Naive thymus-derived CD8-positive, alpha-beta T cell (primary cell): ENCODE measurements at regions of chr1 and their contacts with region 1.

Region 1: DNA sequence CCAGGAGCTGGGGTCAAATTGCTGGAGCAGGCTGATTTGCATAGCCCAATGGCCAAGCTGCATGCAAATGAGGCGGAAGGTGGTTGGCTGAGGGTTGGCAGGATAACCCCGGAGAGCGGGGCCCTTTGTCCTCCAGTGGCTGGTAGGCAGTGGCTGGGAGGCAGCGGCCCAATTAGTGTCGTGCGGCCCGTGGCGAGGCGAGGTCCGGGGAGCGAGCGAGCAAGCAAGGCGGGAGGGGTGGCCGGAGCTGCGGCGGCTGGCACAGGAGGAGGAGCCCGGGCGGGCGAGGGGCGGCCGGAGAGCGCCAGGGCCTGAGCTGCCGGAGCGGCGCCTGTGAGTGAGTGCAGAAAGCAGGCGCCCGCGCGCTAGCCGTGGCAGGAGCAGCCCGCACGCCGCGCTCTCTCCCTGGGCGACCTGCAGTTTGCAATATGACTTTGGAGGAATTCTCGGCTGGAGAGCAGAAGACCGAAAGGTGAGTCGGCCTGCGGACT is at the start of gene GADD45A:
- DNase-seq: peak; percentile 79 to 97 (median 94)
- ATAC-seq: peak; percentile 87 to 89
- H3K4me3 Mint-ChIP-seq: peak within 1 kb of the TSS; percentile 93 to 100 (median 98)
- H3K27ac Mint-ChIP-seq: peak within 1 kb of the TSS; percentile 91 to 97 (median 94)
- H3K4me1 Mint-ChIP-seq: peaks cover 11 to 34% (median 29%) of the 10 kb centered on the region in 4 donors
- H3K27me3 Mint-ChIP-seq: no peaks in the 10 kb centered on the region
- polyA plus RNA-seq, gene GADD45A: 4.1 to 13.0 (median 5.7) TPM

Region 2: DNA sequence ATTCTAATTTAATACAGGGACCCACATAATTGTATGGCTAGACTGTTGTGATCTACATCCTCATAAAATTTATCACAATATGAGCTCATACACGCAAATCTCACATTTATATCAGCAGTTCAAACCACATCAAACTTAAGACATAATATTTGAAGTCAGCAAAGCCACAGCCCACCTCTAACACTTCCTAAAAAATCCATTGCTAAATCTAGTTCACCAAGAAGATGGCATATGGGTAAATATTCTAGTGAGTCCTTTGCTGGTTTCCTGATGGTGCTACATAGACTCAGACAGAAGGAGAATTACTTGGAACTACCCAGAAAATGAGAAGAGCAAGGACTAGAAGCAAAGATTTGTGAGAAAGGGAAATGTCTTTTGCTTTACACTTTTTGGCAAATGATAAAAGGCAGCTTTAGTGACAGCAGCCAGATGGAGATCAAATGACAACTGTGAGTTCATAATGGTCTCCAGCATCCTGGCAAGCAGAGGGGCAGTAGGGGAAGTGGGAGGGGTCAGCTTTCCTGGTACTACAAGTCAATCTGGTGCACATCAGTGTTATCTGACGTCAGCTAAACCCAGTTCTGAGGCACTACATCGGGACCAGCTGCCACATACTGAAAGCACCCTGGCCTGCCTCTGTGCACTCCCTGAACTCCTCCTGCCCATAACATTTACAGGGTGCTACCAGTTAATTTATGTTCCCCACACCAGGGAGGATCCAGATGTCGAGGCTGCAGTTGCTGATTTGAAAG is 10.7 kb before region 1 on chr1:
- POLR2A ChIA-PET with region 1: interaction called, 33 read pairs
- DNase-seq: peak; percentile 25 to 85 (median 70)
- ATAC-seq: peak; percentile 83 to 85
- H3K4me3 Mint-ChIP-seq: peak overlapping the region; percentile 30 to 75 (median 60)
- H3K27ac Mint-ChIP-seq: peak overlapping the region; percentile 46 to 94 (median 88)
- H3K4me1 Mint-ChIP-seq: peaks cover 11 to 25% (median 22%) of the 10 kb centered on the region in 4 donors
- H3K27me3 Mint-ChIP-seq: peaks cover 0 to 11% (median 4%) of the 10 kb centered on the region in 5 donors

Region 3: DNA sequence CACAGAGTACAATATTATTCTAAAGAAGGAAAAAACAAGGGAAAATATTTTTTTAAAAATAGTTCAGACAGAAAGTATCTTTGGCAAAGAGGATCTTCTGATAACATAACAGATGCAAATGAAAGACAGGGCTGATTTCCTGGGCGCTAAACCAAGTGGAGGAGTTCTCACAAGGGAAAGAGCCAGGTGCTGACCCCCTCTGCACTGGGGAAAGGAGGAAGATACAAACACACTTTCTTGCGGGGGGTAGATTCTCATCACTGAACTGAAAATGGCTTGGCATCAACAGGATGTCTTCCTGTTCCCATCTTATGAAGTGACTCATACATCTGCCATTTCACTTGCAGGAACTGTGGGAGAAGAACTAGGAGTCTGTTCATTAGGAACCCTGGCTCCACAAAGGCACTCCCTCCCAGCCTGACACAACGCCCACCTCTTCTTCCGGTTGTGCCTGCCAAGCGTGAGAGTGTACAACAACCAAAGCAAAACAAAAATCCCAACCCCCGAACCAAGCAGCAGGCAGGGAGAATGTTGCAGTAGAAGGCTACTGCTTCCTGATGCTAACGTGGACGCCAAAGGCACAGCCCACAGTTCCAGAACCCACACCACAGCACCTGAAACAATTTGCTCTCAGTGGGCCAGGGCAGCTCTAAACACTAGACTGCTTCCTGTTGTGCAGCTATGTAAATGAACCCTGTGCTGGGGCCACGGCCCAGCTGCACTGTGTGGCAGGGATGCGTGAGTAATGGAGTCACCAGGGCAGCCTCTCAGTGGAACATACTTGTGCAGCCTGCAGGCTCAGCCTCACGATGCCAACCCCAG is 50.9 kb after region 1 on chr1:
- POLR2A ChIA-PET with region 1: interaction called, 15 read pairs
- DNase-seq: peak in 6 of 10 donors; percentile 3 to 36 (median 25)
- ATAC-seq: peak; percentile 90 to 96
- H3K4me3 Mint-ChIP-seq: peak overlapping the region; percentile 64 to 86 (median 77)
- H3K27ac Mint-ChIP-seq: peak overlapping the region; percentile 75 to 95 (median 89)
- H3K4me1 Mint-ChIP-seq: peaks cover 14 to 32% (median 17%) of the 10 kb centered on the region in 4 donors
- H3K27me3 Mint-ChIP-seq: no peaks in the 10 kb centered on the region

Region 4: DNA sequence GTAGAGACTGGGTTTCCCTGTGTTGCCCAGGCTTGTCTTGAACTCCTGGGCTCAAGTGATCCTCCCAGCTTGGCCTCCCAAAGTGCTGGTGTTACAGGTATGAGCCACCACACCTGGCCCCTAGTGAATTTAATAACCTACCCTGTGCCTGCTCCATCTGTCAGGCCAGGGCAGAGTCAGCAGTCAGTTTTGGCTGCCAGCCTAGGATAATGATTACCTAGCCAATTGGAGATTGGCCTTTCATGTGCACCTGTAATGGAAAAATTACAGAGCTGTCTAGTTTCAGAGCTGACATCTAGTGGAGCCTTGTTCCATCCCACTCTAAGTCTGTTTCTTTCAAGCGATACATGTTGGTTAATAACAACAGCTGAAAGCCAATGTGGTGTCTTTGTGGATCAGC is 273.4 kb after region 1 on chr1:
- POLR2A ChIA-PET with region 1: no interaction called
- DNase-seq: no peak
- ATAC-seq: no peak
- H3K4me3 Mint-ChIP-seq: no peak overlapping the region
- H3K27ac Mint-ChIP-seq: no peak overlapping the region
- H3K4me1 Mint-ChIP-seq: no peaks in the 10 kb centered on the region
- H3K27me3 Mint-ChIP-seq: peaks cover 2 to 35% (median 10%) of the 10 kb centered on the region in 5 donors